ENCODE measurements at regions of chr5 and their contacts with region 1.

Region 1: GRCh38 chr5:137218471-137218870 is 280.7 kb downstream of the SPOCK1 start:
- DNase-seq: peak in 10 of 42 donors; percentile 17 to 72 (median 42)

Region 2: GRCh38 chr5:136802383-136802782 is 416.1 kb before region 1 on chr5:
- intact Hi-C with region 1: loop called (anchors 10 kb)
- DNase-seq: peak in 32 of 42 donors; percentile 11 to 70 (median 38)

Measured in head of caudate nucleus (tissue), 42 donors.